Caco-2 (cell line): ENCODE measurements at regions of chr14 and their contacts with region 1.

Region 1: DNA sequence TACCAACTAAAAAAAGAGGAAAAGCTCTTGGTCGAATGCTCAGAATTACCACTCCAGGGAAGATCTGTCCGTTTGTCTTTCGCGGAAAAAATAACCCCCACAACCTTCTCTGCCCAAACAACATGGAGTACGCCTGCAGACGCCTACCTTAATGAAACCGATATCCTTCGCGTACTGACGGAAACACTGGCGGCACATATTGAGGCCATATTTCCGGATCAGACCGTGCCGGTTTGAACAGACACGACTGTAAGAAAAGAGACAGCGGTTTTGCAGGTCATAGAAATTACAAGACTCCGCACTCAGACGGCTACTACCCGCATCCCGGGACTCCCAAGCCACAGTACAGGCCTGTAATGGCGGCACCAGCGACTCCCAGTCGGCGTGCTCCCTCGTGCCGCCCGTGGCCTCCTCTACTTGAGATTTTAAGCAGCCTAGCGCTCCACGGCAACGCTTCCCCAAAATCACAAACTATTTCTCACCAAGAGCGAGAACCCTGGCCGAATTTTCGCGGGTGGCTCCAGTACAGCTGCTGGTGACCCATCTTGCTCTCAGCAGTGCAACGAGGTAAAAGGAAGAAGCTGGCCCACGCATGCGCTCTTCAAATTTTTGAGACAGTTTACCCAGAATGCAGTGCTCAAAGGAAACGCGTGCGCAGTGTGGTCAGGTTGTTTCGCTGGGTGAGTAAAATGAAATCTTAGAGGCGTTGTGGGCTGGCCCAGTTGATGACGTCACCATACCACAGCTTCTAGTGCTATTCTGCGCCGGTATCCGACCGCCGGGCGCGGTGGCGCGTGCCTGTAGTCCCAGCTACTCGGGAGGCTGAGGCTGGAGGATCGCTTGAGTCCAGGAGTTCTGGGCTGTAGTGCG is at the start of gene RPS29:
- DNase-seq: peak; percentile 97 to 98
- H3K4me3 ChIP-seq: peak within 1 kb of the TSS; percentile 97
- H3K4me3 Mint-ChIP-seq: peak within 1 kb of the TSS; percentile 98
- H3K27ac Mint-ChIP-seq: peak within 1 kb of the TSS; percentile 97
- H3K4me1 ChIP-seq: peaks cover 10% of the 10 kb centered on the region
- H3K4me1 Mint-ChIP-seq: peaks cover 20% of the 10 kb centered on the region
- H3K27me3 ChIP-seq: no peaks in the 10 kb centered on the region
- H3K27me3 Mint-ChIP-seq: no peaks in the 10 kb centered on the region
- CTCF ChIP-seq: no peak
- total RNA-seq, gene RPS29: 1,677 and 1,733 TPM in 2 replicates

Region 2: GRCh38 chr14:49206828-49207227 is 379.2 kb before region 1 on chr14:
- CTCF ChIA-PET with region 1: no interaction called
- POLR2A ChIA-PET with region 1: no interaction called
- intact Hi-C with region 1: no loop called
- DNase-seq: no peak
- H3K4me3 ChIP-seq: no peak overlapping the region
- H3K4me3 Mint-ChIP-seq: no peak overlapping the region
- H3K27ac Mint-ChIP-seq: no peak overlapping the region
- H3K4me1 ChIP-seq: peaks cover 11% of the 10 kb centered on the region
- H3K4me1 Mint-ChIP-seq: no peaks in the 10 kb centered on the region
- H3K27me3 ChIP-seq: no peaks in the 10 kb centered on the region
- H3K27me3 Mint-ChIP-seq: peaks cover 10% of the 10 kb centered on the region
- CTCF ChIP-seq: no peak

Region 3: DNA sequence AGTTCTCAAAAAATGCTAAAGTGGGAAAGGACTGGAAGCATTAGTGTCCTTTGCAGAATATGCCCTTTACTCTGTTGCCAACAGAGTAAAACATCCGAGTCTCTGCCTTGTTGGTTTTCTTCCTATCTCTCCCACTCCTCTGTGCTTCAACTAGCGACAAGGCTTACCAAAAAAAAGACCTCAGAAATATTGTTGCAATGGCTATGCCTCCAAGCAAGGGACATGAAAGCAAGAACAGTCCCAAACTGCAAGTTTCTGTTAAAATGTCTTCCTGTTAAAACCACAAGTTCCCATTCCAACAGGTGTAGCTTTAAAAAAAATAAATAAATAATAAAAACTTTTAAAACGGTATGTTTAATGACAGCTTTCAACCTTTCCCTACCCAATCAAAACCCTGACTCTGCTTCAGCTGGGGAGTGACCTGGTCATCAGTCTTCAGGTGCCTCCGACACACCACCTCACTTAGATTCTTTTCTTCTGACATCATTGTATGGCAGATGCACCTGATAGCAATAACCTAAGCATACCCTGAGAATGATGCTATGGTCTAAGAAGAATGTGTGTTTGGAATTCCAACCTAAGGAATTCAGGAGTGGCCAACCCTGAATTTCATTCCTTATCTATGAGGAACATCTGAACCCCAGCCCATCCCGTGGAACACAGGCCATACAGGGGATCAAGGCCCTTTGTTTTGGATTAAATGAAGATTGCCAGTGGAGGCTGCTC is 80.8 kb before region 1 on chr14:
- CTCF ChIA-PET with region 1: no interaction called
- POLR2A ChIA-PET with region 1: no interaction called
- intact Hi-C with region 1: loop called (anchors 1 kb)
- DNase-seq: peak; percentile 83 to 86
- H3K4me3 ChIP-seq: no peak overlapping the region
- H3K4me3 Mint-ChIP-seq: peak overlapping the region; percentile 52
- H3K27ac Mint-ChIP-seq: peak overlapping the region; percentile 95
- H3K4me1 ChIP-seq: peaks cover 42% of the 10 kb centered on the region
- H3K4me1 Mint-ChIP-seq: peaks cover 37% of the 10 kb centered on the region
- H3K27me3 ChIP-seq: no peaks in the 10 kb centered on the region
- H3K27me3 Mint-ChIP-seq: no peaks in the 10 kb centered on the region
- CTCF ChIP-seq: no peak

Region 4: DNA sequence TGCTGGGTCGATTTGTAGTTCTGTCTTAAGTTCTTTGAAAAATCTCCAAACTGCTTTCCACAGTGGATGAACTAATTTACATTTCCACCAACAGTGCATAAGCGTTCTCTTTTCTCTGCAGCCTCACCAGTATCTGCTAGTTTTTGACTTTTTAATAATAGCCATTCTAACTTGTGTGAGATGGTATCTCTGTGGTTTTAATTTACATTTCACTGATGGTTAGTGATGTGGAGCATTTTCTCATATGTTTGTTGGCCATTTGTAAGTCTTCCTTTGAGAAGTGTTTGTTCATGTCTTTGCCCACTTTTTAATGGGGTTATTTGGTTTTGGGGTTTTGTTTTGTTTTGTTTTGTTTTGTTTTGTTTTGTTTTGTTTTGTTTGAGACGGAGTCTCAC is 25.7 kb before region 1 on chr14:
- CTCF ChIA-PET with region 1: no interaction called
- POLR2A ChIA-PET with region 1: no interaction called
- intact Hi-C with region 1: no loop called
- DNase-seq: no peak
- H3K4me3 ChIP-seq: no peak overlapping the region
- H3K4me3 Mint-ChIP-seq: no peak overlapping the region
- H3K27ac Mint-ChIP-seq: no peak overlapping the region
- H3K4me1 ChIP-seq: no peaks in the 10 kb centered on the region
- H3K4me1 Mint-ChIP-seq: no peaks in the 10 kb centered on the region
- H3K27me3 ChIP-seq: no peaks in the 10 kb centered on the region
- H3K27me3 Mint-ChIP-seq: no peaks in the 10 kb centered on the region
- CTCF ChIP-seq: no peak

Region 5: GRCh38 chr14:49598485-49599300 is 12.7 kb after region 1 on chr14 and contains the start of gene LRR1:
- CTCF ChIA-PET with region 1: interaction called, 5 read pairs
- POLR2A ChIA-PET with region 1: interaction called, 13 read pairs
- intact Hi-C with region 1: loop called (anchors 1 kb)
- DNase-seq: peak; percentile 91 to 94
- H3K4me3 ChIP-seq: peak within 1 kb of the TSS; percentile 78
- H3K4me3 Mint-ChIP-seq: peak within 1 kb of the TSS; percentile 97
- H3K27ac Mint-ChIP-seq: peak within 1 kb of the TSS; percentile 97
- H3K4me1 ChIP-seq: peaks cover 24% of the 10 kb centered on the region
- H3K4me1 Mint-ChIP-seq: peaks cover 25% of the 10 kb centered on the region
- H3K27me3 ChIP-seq: no peaks in the 10 kb centered on the region
- H3K27me3 Mint-ChIP-seq: no peaks in the 10 kb centered on the region
- CTCF ChIP-seq: no peak
- total RNA-seq, gene LRR1: 32.0 and 34.8 TPM in 2 replicates

Region 6: GRCh38 chr14:49620182-49621113 is 34.4 kb after region 1 on chr14 and contains the starts of genes MGAT2 and RPL36AL:
- CTCF ChIA-PET with region 1: interaction called, 6 read pairs
- POLR2A ChIA-PET with region 1: interaction called, 15 read pairs
- intact Hi-C with region 1: no loop called
- DNase-seq: peak; percentile 99
- H3K4me3 ChIP-seq: peak within 1 kb of the TSS; percentile 84
- H3K4me3 Mint-ChIP-seq: peak within 1 kb of the TSS; percentile 91
- H3K27ac Mint-ChIP-seq: peak within 1 kb of the TSS; percentile 93
- H3K4me1 ChIP-seq: peaks cover 27% of the 10 kb centered on the region
- H3K4me1 Mint-ChIP-seq: peaks cover 16% of the 10 kb centered on the region
- H3K27me3 ChIP-seq: no peaks in the 10 kb centered on the region
- H3K27me3 Mint-ChIP-seq: no peaks in the 10 kb centered on the region
- CTCF ChIP-seq: peak in 1 of 2 experiments; percentile 28
- total RNA-seq, gene MGAT2: 42.1 and 47.5 TPM in 2 replicates
- total RNA-seq, gene RPL36AL: 181 and 191 TPM in 2 replicates